Esophagus muscularis mucosa (tissue), 4 donors: ENCODE measurements at regions of chr22 and their contacts with region 1.

Region 1: GRCh38 chr22:39152511-39153219 is at the start of gene CBX7:
- DNase-seq: peak; percentile 97
- H3K4me3 ChIP-seq: peak within 1 kb of the TSS; percentile 84 to 98 (median 96)
- H3K27ac ChIP-seq: peak within 1 kb of the TSS; percentile 97 to 99 (median 98)
- H3K4me1 ChIP-seq: peaks cover 40 to 54% (median 52%) of the 10 kb centered on the region in 4 donors
- H3K27me3 ChIP-seq: no peaks in the 10 kb centered on the region
- CTCF ChIP-seq: no peak
- EP300 ChIP-seq: no peak
- POLR2A ChIP-seq: peak; percentile 69
- total RNA-seq, gene CBX7: 129 to 251 (median 173) TPM

Region 2: DNA sequence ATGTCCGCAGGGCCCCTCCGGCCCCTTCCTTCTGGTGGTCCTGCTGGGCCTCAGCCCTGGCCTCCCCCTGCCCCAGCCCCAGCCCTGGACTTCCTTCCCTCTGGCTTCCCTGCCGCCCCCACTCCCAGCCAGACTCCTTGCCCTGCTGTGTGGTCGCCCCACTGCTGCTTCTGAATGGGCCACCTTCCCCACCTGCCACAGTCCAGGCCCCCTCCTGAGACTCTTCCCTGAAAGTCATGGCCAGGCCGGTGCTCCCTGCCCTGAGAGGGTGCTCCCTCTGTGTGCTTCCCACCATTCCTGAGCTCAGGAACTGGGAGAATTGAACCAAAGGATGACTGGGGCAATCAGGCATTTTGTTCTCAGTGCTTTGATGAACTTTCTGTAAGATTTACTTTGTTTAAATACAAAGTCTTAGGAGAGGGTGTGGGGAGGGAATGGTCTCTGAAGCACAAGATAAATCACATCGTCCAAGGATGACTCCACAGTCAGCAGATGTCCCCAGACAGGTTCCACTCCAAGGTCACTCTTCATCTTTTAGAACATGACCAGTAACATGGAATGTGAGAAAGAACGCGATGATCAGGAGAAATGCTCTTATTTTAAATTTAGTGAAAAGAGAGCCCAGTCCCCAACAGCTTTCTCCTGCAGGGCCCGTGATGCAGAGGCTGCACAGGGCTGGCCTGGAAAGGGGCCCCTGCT is 131.0 kb before region 1 on chr22:
- intact Hi-C with region 1: no loop called
- DNase-seq: no peak
- H3K4me3 ChIP-seq: peak overlapping the region; percentile 43 to 57 (median 48)
- H3K27ac ChIP-seq: peak overlapping the region; percentile 65 to 76 (median 73)
- H3K4me1 ChIP-seq: peaks cover 4 to 24% (median 23%) of the 10 kb centered on the region in 4 donors
- H3K27me3 ChIP-seq: no peaks in the 10 kb centered on the region
- CTCF ChIP-seq: no peak
- EP300 ChIP-seq: no peak
- POLR2A ChIP-seq: no peak

Region 3: DNA sequence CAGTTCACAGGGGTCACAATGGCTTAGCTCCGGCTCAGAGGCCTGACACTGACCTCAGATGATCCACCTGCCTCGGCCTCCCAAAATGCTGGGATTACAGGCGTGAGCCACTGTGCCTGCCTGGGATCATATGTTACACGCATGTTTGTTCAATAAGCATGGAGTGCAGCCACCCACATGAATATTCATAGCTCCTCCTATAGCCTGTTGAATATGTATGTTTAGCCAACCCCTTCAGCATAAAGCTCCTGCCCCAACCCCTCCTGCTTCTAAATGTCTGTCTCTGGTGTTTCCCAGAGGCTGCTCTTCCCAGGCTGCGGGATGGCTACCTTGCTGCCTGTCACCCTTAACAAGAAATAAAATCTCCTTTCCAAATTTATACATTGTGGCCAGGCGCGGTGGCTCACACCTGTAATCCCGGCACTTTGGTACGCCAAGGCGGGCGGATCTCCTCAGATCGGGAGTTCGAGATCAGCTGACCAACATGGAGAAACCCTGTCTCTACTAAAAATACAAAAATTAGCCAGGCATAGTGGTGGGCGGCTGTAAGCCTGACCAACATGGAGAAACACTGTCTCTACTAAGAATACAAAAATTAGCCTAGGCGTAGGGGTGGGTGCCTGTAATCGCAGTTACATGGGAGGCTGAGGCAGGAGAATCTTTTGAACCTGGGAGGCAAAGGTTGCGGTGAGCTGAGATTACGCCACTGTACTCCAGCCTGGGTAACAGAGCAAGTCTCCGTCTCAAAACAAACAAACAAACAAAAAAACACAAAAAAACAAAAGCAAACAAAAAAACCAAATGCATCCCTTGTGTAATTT is 113.1 kb before region 1 on chr22:
- intact Hi-C with region 1: no loop called
- DNase-seq: no peak
- H3K4me3 ChIP-seq: peak overlapping the region in 2 of 4 donors; percentile 63 to 65
- H3K27ac ChIP-seq: peak overlapping the region; percentile 87 to 89 (median 89)
- H3K4me1 ChIP-seq: peaks cover 7 to 24% (median 17%) of the 10 kb centered on the region in 4 donors
- H3K27me3 ChIP-seq: no peaks in the 10 kb centered on the region
- CTCF ChIP-seq: no peak
- EP300 ChIP-seq: no peak
- POLR2A ChIP-seq: no peak

Region 4: GRCh38 chr22:39319270-39320022 is 166.8 kb after region 1 on chr22 and contains the start of gene RPL3:
- intact Hi-C with region 1: loop called (anchors 5 kb)
- DNase-seq: peak; percentile 99
- H3K4me3 ChIP-seq: peak within 1 kb of the TSS; percentile 66 to 81 (median 78)
- H3K27ac ChIP-seq: peak within 1 kb of the TSS; percentile 96 to 99 (median 98)
- H3K4me1 ChIP-seq: peaks cover 46 to 54% (median 50%) of the 10 kb centered on the region in 4 donors
- H3K27me3 ChIP-seq: no peaks in the 10 kb centered on the region
- CTCF ChIP-seq: peak in 2 of 3 experiments; percentile 28 to 30
- EP300 ChIP-seq: no peak
- POLR2A ChIP-seq: peak; percentile 97
- total RNA-seq, gene RPL3: 2,019 to 2,284 (median 2,183) TPM